Caco-2 (cell line): ENCODE measurements at regions of chr11 and their contacts with region 1.

Region 1: GRCh38 chr11:119030329-119031049 is at the start of gene SLC37A4:
- DNase-seq: peak; percentile 100
- H3K4me3 ChIP-seq: peak within 1 kb of the TSS; percentile 95
- H3K4me3 Mint-ChIP-seq: peak within 1 kb of the TSS; percentile 93
- H3K27ac Mint-ChIP-seq: peak within 1 kb of the TSS; percentile 90
- H3K4me1 ChIP-seq: peaks cover 37% of the 10 kb centered on the region
- H3K4me1 Mint-ChIP-seq: peaks cover 43% of the 10 kb centered on the region
- H3K27me3 ChIP-seq: no peaks in the 10 kb centered on the region
- H3K27me3 Mint-ChIP-seq: no peaks in the 10 kb centered on the region
- CTCF ChIP-seq: peak; percentile 95 to 99
- total RNA-seq, gene SLC37A4: 97.8 and 108 TPM in 2 replicates

Region 2: DNA sequence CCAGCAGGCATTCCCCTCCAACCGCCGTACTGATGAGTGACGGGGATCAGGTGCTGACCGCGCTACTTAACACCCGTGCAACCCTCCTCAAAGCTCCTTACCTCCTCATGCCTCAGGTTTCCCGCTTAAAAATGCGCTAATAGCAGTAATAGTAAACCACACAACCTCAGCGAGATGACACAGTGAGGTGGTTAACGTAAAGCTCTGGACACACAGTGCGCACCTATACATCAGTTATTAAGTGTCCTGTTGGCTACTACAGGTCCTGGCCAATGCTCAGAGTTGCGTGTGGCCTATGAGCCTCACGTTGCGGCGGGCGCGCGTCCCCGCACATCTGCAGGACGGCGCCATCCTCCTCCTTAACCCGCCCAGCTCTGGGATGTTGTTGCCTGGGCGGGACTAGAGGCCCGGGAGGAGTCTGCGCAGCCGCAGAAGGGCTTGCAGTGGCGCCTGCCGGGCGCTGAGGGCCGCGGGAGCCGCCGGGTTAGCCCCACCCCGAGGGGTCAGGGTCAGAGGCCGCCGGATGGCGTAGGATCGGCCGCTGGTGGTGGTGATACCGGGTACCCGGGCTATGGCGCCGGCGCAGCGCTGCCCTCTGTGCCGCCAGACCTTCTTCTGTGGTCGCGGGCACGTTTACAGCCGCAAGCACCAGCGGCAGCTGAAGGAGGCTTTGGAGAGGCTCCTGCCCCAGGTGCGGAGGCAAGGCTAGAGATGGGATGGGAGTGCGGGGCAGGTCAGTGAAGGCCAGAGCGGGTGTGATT is 32.7 kb before region 1 on chr11 and contains the start of gene CENATAC:
- CTCF ChIA-PET with region 1: no interaction called
- POLR2A ChIA-PET with region 1: interaction called, 5 read pairs
- intact Hi-C with region 1: loop called (anchors 1 kb)
- DNase-seq: peak; percentile 98 to 100
- H3K4me3 ChIP-seq: peak within 1 kb of the TSS; percentile 75
- H3K4me3 Mint-ChIP-seq: peak within 1 kb of the TSS; percentile 96
- H3K27ac Mint-ChIP-seq: peak within 1 kb of the TSS; percentile 94
- H3K4me1 ChIP-seq: peaks cover 17% of the 10 kb centered on the region
- H3K4me1 Mint-ChIP-seq: peaks cover 24% of the 10 kb centered on the region
- H3K27me3 ChIP-seq: no peaks in the 10 kb centered on the region
- H3K27me3 Mint-ChIP-seq: no peaks in the 10 kb centered on the region
- CTCF ChIP-seq: peak in 1 of 2 experiments; percentile 11
- total RNA-seq, gene CENATAC: 185 and 194 TPM in 2 replicates

Region 3: DNA sequence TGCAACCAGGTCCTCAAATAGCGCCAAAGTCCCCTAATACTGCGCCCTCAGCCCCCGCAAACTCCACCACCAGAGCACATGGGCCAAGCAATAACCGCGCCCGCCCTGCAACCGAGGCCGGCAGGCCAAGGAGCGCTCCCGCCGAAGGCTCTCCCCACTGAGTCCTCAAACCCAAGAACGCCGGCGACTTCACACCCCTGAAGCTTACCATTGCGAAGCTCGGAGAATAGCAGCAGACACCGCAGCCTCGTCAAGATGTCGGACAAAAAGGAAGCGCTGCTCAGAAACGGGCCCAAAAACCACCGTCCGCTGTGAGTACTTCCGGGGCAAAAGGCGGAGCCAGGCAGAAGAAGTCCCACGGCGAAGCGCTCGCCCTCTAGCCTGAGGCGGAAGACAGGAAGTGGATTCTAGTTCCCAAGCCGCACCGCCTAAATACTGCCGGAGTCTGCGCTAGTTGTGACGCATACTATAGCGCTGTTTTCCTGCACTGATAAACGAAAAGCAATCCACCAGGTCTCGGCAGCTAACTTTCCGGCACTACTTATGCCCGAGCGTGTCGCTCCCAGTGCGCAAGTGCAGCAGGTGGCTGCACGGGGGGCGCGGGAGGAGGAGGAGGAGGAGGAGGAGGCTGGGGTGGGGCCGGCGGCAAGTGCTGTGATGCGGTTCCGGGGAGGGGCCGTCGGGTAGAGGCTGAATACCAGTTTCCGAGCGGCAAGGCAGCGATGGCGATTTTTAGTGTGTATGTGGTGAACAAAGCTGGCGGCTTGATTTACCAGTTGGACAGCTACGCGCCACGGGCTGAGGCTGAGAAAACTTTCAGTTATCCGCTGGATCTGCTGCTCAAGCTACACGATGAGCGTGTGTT is 12.2 kb before region 1 on chr11 and contains the starts of genes RPS25 and TRAPPC4:
- CTCF ChIA-PET with region 1: interaction called, 5 read pairs
- POLR2A ChIA-PET with region 1: interaction called, 6 read pairs
- intact Hi-C with region 1: loop called (anchors 1 kb)
- DNase-seq: peak; percentile 98 to 99
- H3K4me3 ChIP-seq: peak within 1 kb of the TSS; percentile 91
- H3K4me3 Mint-ChIP-seq: peak within 1 kb of the TSS; percentile 96
- H3K27ac Mint-ChIP-seq: peak within 1 kb of the TSS; percentile 98
- H3K4me1 ChIP-seq: peaks cover 46% of the 10 kb centered on the region
- H3K4me1 Mint-ChIP-seq: peaks cover 25% of the 10 kb centered on the region
- H3K27me3 ChIP-seq: no peaks in the 10 kb centered on the region
- H3K27me3 Mint-ChIP-seq: no peaks in the 10 kb centered on the region
- CTCF ChIP-seq: no peak
- total RNA-seq, gene RPS25: 1,811 and 1,967 TPM in 2 replicates
- total RNA-seq, gene TRAPPC4: 118 and 126 TPM in 2 replicates

Region 4: GRCh38 chr11:119057000-119057769 is 26.7 kb after region 1 on chr11 and contains the start of gene HYOU1:
- CTCF ChIA-PET with region 1: interaction called, 4 read pairs
- POLR2A ChIA-PET with region 1: interaction called, 6 read pairs
- intact Hi-C with region 1: loop called (anchors 1 kb)
- DNase-seq: peak; percentile 100
- H3K4me3 ChIP-seq: peak within 1 kb of the TSS; percentile 94
- H3K4me3 Mint-ChIP-seq: peak within 1 kb of the TSS; percentile 88
- H3K27ac Mint-ChIP-seq: peak within 1 kb of the TSS; percentile 98
- H3K4me1 ChIP-seq: peaks cover 10% of the 10 kb centered on the region
- H3K4me1 Mint-ChIP-seq: peaks cover 20% of the 10 kb centered on the region
- H3K27me3 ChIP-seq: no peaks in the 10 kb centered on the region
- H3K27me3 Mint-ChIP-seq: no peaks in the 10 kb centered on the region
- CTCF ChIP-seq: peak; percentile 32 to 77
- total RNA-seq, gene HYOU1: 306 and 366 TPM in 2 replicates

Region 5: DNA sequence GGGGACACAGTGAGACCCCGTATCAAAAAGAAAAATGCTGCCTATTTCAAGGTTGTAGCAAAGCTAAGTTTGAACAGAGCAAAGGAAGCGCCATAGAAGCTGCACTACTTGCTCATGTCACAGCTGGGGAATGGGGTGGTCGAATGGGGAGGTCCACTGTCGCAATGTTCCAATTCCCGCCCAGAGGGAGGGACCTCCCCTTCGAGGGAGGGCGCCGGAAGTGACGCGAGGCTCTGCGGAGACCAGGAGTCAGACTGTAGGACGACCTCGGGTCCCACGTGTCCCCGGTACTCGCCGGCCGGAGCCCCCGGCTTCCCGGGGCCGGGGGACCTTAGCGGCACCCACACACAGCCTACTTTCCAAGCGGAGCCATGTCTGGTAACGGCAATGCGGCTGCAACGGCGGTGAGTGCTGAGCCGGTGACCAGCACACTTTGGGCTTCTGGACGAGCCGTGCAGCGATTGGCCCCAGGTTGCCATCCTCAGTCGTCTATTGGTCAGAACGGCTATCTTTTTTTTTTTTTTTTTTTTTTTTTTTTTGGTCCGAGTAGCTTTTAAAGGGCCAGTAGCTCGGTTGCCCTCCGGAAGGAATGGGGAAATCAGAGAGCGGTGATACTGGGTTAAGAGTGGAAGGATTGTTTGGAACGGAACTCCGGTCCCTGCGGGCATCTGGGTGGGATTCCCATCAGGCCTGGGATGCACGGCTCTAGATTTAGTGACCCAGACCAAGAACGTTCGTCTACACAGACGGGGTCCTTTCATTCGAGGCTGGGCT is 54.4 kb after region 1 on chr11 and contains the start of gene HMBS:
- CTCF ChIA-PET with region 1: no interaction called
- POLR2A ChIA-PET with region 1: interaction called, 3 read pairs
- intact Hi-C with region 1: loop called (anchors 2 kb)
- DNase-seq: peak; percentile 97 to 98
- H3K4me3 ChIP-seq: peak within 1 kb of the TSS; percentile 85
- H3K4me3 Mint-ChIP-seq: peak within 1 kb of the TSS; percentile 97
- H3K27ac Mint-ChIP-seq: peak within 1 kb of the TSS; percentile 98
- H3K4me1 ChIP-seq: peaks cover 11% of the 10 kb centered on the region
- H3K4me1 Mint-ChIP-seq: peaks cover 1% of the 10 kb centered on the region
- H3K27me3 ChIP-seq: no peaks in the 10 kb centered on the region
- H3K27me3 Mint-ChIP-seq: no peaks in the 10 kb centered on the region
- CTCF ChIP-seq: no peak
- total RNA-seq, gene HMBS: 94.9 and 95.7 TPM in 2 replicates

Region 6: DNA sequence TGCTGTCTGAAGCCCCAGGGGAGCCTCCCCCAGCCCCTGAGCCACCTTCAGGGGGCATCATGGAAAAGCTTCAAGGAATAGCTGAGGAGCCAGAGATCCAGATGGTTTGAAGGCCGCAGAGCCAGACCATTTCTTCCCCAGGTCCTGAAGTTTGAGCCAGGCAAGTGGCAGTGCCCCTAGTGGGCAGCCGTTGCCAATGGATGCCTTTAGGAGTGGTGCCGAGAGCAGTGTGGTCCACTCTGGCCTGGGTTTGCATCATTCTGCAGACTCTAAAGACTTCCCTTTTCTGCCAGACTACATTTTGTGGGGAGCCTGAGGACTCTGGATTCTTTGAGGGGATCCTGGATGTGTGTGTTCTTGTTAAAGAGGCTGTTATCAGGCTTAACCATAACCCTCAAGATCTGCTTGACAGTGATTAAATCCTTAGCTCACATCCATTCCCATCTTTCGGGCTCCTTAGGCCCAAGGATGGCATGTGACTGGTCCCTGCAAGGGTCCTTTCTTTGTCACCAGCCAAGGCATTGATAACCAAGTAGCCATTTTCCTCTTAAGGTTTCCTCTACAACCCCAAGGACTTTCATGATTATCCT is 104.0 kb after region 1 on chr11:
- CTCF ChIA-PET with region 1: no interaction called
- POLR2A ChIA-PET with region 1: no interaction called
- intact Hi-C with region 1: no loop called
- DNase-seq: peak in 1 of 2 experiments; percentile 47
- H3K4me3 ChIP-seq: no peak overlapping the region
- H3K4me3 Mint-ChIP-seq: no peak overlapping the region
- H3K27ac Mint-ChIP-seq: no peak overlapping the region
- H3K4me1 ChIP-seq: no peaks in the 10 kb centered on the region
- H3K4me1 Mint-ChIP-seq: no peaks in the 10 kb centered on the region
- H3K27me3 ChIP-seq: no peaks in the 10 kb centered on the region
- H3K27me3 Mint-ChIP-seq: no peaks in the 10 kb centered on the region
- CTCF ChIP-seq: peak; percentile 74